A549 (cell line): ENCODE measurements at regions of chr20 and their contacts with region 1.

Region 1: DNA sequence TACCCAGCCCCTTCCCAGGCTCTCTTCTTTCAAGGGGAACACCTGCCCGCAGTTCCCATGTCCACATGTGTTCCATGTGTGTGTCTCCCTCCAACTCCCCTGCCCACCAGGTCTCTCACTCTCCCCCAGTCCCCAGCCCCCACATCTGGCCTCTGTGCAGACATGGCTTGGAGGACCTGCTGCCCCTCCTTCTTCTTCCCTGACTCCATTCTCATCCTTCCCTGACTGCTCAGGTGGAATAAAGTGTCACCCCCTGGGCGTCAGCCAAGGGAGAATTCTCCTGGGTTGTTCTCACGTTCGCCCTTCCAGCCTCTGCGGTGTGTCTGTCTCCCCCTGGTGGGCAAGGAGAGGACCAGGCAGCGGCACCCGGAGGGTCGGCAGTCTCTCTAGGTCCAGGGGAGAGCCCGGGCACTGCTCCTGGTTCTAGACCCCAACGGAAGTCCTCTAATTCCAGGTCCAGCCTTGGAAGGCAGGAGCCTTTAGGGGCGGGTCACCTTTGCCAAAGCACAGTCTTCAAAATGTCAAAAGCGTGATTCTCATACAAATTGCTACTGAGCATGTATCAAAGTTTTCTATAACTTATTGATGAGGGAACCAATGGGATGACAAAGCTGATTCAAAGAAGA is 50.5 kb downstream of the EBF4 start:
- DNase-seq: peak; percentile 71 to 87
- ATAC-seq: peak; percentile 71 to 91
- H3K4me3 ChIP-seq: no peak overlapping the region
- H3K27ac ChIP-seq: no peak overlapping the region
- H3K4me1 ChIP-seq: peaks cover 15% of the 10 kb centered on the region; the same call in 2 of the 3 replicates
- CTCF ChIP-seq: peak; percentile 89
- EP300 ChIP-seq: no peak
- POLR2A ChIP-seq: no peak
- RAD21 ChIP-seq: peak; percentile 60 to 65

Region 2: GRCh38 chr20:2688041-2688591 is 54.9 kb before region 1 on chr20:
- CTCF ChIA-PET with region 1: interaction called, 18 read pairs
- POLR2A ChIA-PET with region 1: no interaction called
- DNase-seq: peak in 1 of 2 experiments; percentile 59
- ATAC-seq: peak in 1 of 2 experiments; percentile 65; a peak in 3 of 6 replicates
- H3K4me3 ChIP-seq: no peak overlapping the region
- H3K27ac ChIP-seq: no peak overlapping the region
- H3K4me1 ChIP-seq: 0 out of 3 replicates have a peak, but pooled peaks cover 3% of the 10 kb centered on the region
- CTCF ChIP-seq: peak; percentile 51
- EP300 ChIP-seq: no peak
- POLR2A ChIP-seq: no peak
- RAD21 ChIP-seq: peak; percentile 61 to 71

Region 3: GRCh38 chr20:2706688-2707352 is 36.2 kb before region 1 on chr20:
- CTCF ChIA-PET with region 1: interaction called, 24 read pairs
- POLR2A ChIA-PET with region 1: no interaction called
- DNase-seq: no peak
- ATAC-seq: no peak; a peak in 1 of 6 replicates
- H3K4me3 ChIP-seq: no peak overlapping the region
- H3K27ac ChIP-seq: no peak overlapping the region
- H3K4me1 ChIP-seq: no peaks in the 10 kb centered on the region
- CTCF ChIP-seq: no peak
- EP300 ChIP-seq: no peak
- POLR2A ChIP-seq: no peak
- RAD21 ChIP-seq: no peak

Region 4: DNA sequence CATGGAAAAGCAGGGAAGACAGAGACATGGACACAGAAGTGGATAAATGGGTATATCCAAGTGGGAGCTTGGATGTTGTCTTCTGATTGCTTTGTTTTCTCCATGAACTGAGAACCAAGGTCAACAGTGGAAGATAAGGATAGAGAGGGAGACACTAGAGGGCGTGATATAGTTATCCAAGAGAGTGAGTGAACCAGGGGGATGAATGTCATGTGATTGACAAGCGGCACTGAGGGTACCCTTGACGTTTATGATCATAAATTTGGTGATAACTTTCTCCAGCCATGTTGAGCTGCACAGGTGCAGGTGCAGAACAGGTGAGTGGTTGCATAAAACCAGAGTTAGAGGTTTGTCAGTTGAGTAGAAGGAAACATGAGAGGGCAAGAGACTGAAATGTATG is 29.8 kb before region 1 on chr20:
- CTCF ChIA-PET with region 1: interaction called, 24 read pairs
- POLR2A ChIA-PET with region 1: no interaction called
- DNase-seq: peak in 1 of 2 experiments; percentile 43
- ATAC-seq: peak; percentile 75 to 87
- H3K4me3 ChIP-seq: no peak overlapping the region
- H3K27ac ChIP-seq: no peak overlapping the region
- H3K4me1 ChIP-seq: no peaks in the 10 kb centered on the region
- CTCF ChIP-seq: peak; percentile 60
- EP300 ChIP-seq: no peak
- POLR2A ChIP-seq: no peak
- RAD21 ChIP-seq: peak; percentile 54 to 69

Region 5: GRCh38 chr20:2729251-2729713 is 13.8 kb before region 1 on chr20:
- CTCF ChIA-PET with region 1: interaction called, 12 read pairs
- POLR2A ChIA-PET with region 1: no interaction called
- DNase-seq: no peak
- ATAC-seq: no peak
- H3K4me3 ChIP-seq: no peak overlapping the region
- H3K27ac ChIP-seq: no peak overlapping the region
- H3K4me1 ChIP-seq: no peaks in the 10 kb centered on the region
- CTCF ChIP-seq: no peak
- EP300 ChIP-seq: no peak
- POLR2A ChIP-seq: no peak
- RAD21 ChIP-seq: no peak

Region 6: GRCh38 chr20:2759603-2760296 is 16.7 kb after region 1 on chr20:
- CTCF ChIA-PET with region 1: interaction called, 31 read pairs
- POLR2A ChIA-PET with region 1: no interaction called
- DNase-seq: no peak
- ATAC-seq: no peak
- H3K4me3 ChIP-seq: no peak overlapping the region
- H3K27ac ChIP-seq: no peak overlapping the region
- H3K4me1 ChIP-seq: peaks cover 4% of the 10 kb centered on the region; the same call in 1 of the 3 replicates
- CTCF ChIP-seq: no peak
- EP300 ChIP-seq: no peak
- POLR2A ChIP-seq: no peak
- RAD21 ChIP-seq: no peak

Region 7: GRCh38 chr20:2783908-2784566 is 41.0 kb after region 1 on chr20:
- CTCF ChIA-PET with region 1: no interaction called
- POLR2A ChIA-PET with region 1: no interaction called
- DNase-seq: no peak
- ATAC-seq: 0 out of 6 replicates have a peak, but pooled peaks of 1 of the 2 experiments have one; percentile 35
- H3K4me3 ChIP-seq: no peak overlapping the region
- H3K27ac ChIP-seq: no peak overlapping the region
- H3K4me1 ChIP-seq: 0 out of 3 replicates have a peak, but pooled peaks cover 3% of the 10 kb centered on the region
- CTCF ChIP-seq: no peak
- EP300 ChIP-seq: no peak
- POLR2A ChIP-seq: no peak
- RAD21 ChIP-seq: no peak

Region 8: DNA sequence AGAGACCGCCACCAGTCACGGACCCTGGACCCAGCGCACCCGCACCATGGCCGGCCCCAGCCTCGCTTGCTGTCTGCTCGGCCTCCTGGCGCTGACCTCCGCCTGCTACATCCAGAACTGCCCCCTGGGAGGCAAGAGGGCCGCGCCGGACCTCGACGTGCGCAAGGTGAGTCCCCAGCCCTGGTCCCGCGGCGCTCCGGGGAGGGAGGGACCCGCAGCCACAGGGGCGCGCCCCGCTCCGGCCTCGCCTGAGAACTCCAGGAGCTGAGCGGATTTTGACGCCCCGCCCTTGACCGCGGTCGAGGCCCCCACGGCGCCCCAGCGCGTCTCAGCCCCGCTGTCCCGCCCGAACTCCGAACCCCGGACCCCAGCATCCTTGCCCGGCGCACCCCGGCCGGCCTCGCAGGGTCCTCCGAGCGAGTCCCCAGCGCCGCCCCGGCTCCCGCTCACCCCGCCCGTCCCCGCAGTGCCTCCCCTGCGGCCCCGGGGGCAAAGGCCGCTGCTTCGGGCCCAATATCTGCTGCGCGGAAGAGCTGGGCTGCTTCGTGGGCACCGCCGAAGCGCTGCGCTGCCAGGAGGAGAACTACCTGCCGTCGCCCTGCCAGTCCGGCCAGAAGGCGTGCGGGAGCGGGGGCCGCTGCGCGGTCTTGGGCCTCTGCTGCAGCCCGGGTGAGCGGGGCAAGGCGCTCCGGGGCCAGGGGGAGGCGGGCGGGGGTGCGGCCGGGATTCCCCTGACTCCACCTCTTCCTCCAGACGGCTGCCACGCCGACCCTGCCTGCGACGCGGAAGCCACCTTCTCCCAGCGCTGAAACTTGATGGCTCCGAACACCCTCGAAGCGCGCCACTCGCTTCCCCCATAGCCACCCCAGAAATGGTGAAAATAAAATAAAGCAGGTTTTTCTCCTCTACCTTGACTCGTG is 328.8 kb after region 1 on chr20 and contains the start of gene OXT:
- CTCF ChIA-PET with region 1: no interaction called
- POLR2A ChIA-PET with region 1: no interaction called
- DNase-seq: no peak
- ATAC-seq: no peak
- H3K4me3 ChIP-seq: no peak within 1 kb of the TSS
- H3K27ac ChIP-seq: no peak within 1 kb of the TSS
- H3K4me1 ChIP-seq: peaks cover 14% of the 10 kb centered on the region
- CTCF ChIP-seq: no peak
- EP300 ChIP-seq: no peak
- POLR2A ChIP-seq: no peak
- RAD21 ChIP-seq: no peak
- polyA plus RNA-seq, gene OXT: not detected in 2 replicates